ENCODE measurements at regions of chr3 and their contacts with region 1.

Region 1: GRCh38 chr3:101779047-101779821 is at the start of gene NXPE3:
- DNase-seq: peak; percentile 93
- ATAC-seq: peak; percentile 92
- H3K4me3 ChIP-seq: peak within 1 kb of the TSS; percentile 65 to 89 (median 88)
- H3K4me3 Mint-ChIP-seq: peak within 1 kb of the TSS; percentile 94
- H3K27ac ChIP-seq: peak within 1 kb of the TSS; percentile 79 to 86
- H3K27ac Mint-ChIP-seq: peak within 1 kb of the TSS; percentile 98
- H3K4me1 ChIP-seq: peaks cover 21 to 29% of the 10 kb centered on the region in 2 donors
- H3K4me1 Mint-ChIP-seq: peaks cover 37% of the 10 kb centered on the region
- H3K27me3 ChIP-seq: no peaks in the 10 kb centered on the region
- H3K27me3 Mint-ChIP-seq: no peaks in the 10 kb centered on the region
- CTCF ChIP-seq: no peak
- total RNA-seq, gene NXPE3: 18.9 and 19.7 TPM in 2 replicates

Region 2: GRCh38 chr3:100982710-100983109 is 796.5 kb before region 1 on chr3:
- CTCF ChIA-PET with region 1: no interaction called
- POLR2A ChIA-PET with region 1: no interaction called
- intact Hi-C with region 1: no loop called
- DNase-seq: no peak
- ATAC-seq: no peak
- H3K4me3 ChIP-seq: no peak overlapping the region
- H3K4me3 Mint-ChIP-seq: no peak overlapping the region
- H3K27ac ChIP-seq: no peak overlapping the region
- H3K27ac Mint-ChIP-seq: no peak overlapping the region
- H3K4me1 ChIP-seq: no peaks in the 10 kb centered on the region
- H3K4me1 Mint-ChIP-seq: no peaks in the 10 kb centered on the region
- H3K27me3 ChIP-seq: no peaks in the 10 kb centered on the region
- H3K27me3 Mint-ChIP-seq: no peaks in the 10 kb centered on the region
- CTCF ChIP-seq: no peak

Region 3: GRCh38 chr3:101512646-101513418 is 266.4 kb before region 1 on chr3 and contains the start of gene SENP7:
- CTCF ChIA-PET with region 1: no interaction called
- POLR2A ChIA-PET with region 1: no interaction called
- intact Hi-C with region 1: loop called (anchors 5 kb)
- DNase-seq: peak; percentile 89
- ATAC-seq: peak; percentile 72
- H3K4me3 ChIP-seq: peak within 1 kb of the TSS; percentile 67 to 97 (median 86)
- H3K4me3 Mint-ChIP-seq: peak within 1 kb of the TSS; percentile 100
- H3K27ac ChIP-seq: peak within 1 kb of the TSS; percentile 91 to 95
- H3K27ac Mint-ChIP-seq: peak within 1 kb of the TSS; percentile 99
- H3K4me1 ChIP-seq: peaks cover 11 to 12% of the 10 kb centered on the region in 2 donors
- H3K4me1 Mint-ChIP-seq: peaks cover 46% of the 10 kb centered on the region
- H3K27me3 ChIP-seq: peaks cover 0 to 5% (median 0%) of the 10 kb centered on the region in 4 experiments
- H3K27me3 Mint-ChIP-seq: peaks cover 11% of the 10 kb centered on the region
- CTCF ChIP-seq: no peak
- total RNA-seq, gene SENP7: 47.5 and 50.3 TPM in 2 replicates

Region 4: DNA sequence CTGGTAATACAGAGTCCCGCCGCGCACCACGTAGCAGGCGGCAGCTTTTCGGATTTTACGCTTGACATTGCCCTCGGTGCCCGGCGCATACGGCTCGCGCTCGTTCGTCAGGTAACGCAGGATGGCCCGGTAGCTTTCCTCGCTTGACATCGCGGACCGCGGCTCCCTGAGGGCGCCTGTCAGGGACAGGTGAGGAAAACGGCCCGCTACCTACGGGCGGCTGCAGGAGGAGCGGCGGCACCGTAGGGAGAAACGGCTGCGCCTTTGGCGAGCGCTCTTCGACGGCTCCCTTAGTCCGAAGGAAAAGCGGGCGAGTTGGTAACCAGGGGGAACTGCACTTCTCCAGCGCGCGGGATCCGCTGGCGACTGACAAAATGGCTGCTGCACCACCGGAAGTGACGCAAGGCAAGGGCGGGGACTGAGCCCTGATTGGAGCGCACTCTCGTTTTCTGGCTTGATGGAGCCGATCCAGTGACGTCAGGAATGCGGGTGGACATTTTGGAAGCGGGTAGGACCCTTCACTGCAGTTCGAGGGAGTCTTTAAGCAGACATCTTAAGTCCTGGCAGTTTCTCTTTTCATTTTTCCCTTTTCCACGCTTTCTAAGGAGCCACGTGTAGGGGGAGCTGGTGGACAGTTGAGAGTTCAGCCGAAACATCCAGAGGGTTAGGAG is 102.3 kb before region 1 on chr3 and contains the start of gene ZBTB11:
- CTCF ChIA-PET with region 1: no interaction called
- POLR2A ChIA-PET with region 1: interaction called, 5 read pairs
- intact Hi-C with region 1: loop called (anchors 1 kb)
- DNase-seq: peak; percentile 99
- ATAC-seq: peak; percentile 65
- H3K4me3 ChIP-seq: peak within 1 kb of the TSS; percentile 73 to 99 (median 94)
- H3K4me3 Mint-ChIP-seq: peak within 1 kb of the TSS; percentile 94
- H3K27ac ChIP-seq: peak within 1 kb of the TSS; percentile 96 to 98
- H3K27ac Mint-ChIP-seq: peak within 1 kb of the TSS; percentile 97
- H3K4me1 ChIP-seq: peaks cover 17 to 21% of the 10 kb centered on the region in 2 donors
- H3K4me1 Mint-ChIP-seq: peaks cover 40% of the 10 kb centered on the region
- H3K27me3 ChIP-seq: no peaks in the 10 kb centered on the region
- H3K27me3 Mint-ChIP-seq: no peaks in the 10 kb centered on the region
- CTCF ChIP-seq: no peak
- total RNA-seq, gene ZBTB11: 40.7 and 42.6 TPM in 2 replicates

Region 5: DNA sequence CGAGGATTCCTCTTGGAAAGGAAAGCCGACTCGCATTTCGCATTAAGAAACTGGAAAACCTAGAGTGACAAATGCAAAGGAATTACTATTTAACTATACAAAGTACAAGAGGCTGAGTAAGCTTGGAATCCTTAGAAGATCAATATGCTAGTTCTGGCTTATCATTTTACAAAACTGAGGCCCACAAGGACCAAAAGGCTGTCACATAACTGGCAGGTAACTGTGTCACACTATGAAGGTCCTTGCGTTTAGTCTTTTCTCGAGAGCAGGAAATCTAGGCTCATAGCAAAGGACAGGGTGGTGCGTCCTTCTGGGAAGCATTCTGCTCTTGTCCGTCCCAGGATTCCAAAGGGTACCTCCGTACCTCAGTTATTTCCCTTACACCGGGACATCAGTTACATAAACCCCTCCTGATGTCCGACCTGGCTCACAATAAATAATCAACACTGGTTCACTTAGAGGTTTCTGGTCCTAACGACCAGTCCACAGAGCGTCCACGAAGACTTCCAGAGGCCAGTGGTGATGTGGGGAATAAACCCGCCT is 93.3 kb before region 1 on chr3:
- CTCF ChIA-PET with region 1: interaction called, 3 read pairs
- POLR2A ChIA-PET with region 1: interaction called, 6 read pairs
- intact Hi-C with region 1: loop called (anchors 2 kb)
- DNase-seq: no peak
- ATAC-seq: peak; percentile 6
- H3K4me3 ChIP-seq: peak overlapping the region; percentile 64 to 98 (median 84)
- H3K4me3 Mint-ChIP-seq: peak overlapping the region; percentile 100
- H3K27ac ChIP-seq: peak overlapping the region; percentile 89 to 90
- H3K27ac Mint-ChIP-seq: peak overlapping the region; percentile 99
- H3K4me1 ChIP-seq: peaks cover 22 to 32% of the 10 kb centered on the region in 2 donors
- H3K4me1 Mint-ChIP-seq: peaks cover 32% of the 10 kb centered on the region
- H3K27me3 ChIP-seq: no peaks in the 10 kb centered on the region
- H3K27me3 Mint-ChIP-seq: no peaks in the 10 kb centered on the region
- CTCF ChIP-seq: peak; percentile 12

Region 6: GRCh38 chr3:101695779-101696372 is 83.4 kb before region 1 on chr3:
- CTCF ChIA-PET with region 1: interaction called, 3 read pairs
- POLR2A ChIA-PET with region 1: no interaction called
- intact Hi-C with region 1: loop called (anchors 2 kb)
- DNase-seq: peak; percentile 76
- ATAC-seq: no peak
- H3K4me3 ChIP-seq: no peak overlapping the region
- H3K4me3 Mint-ChIP-seq: no peak overlapping the region
- H3K27ac ChIP-seq: no peak overlapping the region
- H3K27ac Mint-ChIP-seq: no peak overlapping the region
- H3K4me1 ChIP-seq: no peaks in the 10 kb centered on the region
- H3K4me1 Mint-ChIP-seq: peaks cover 4% of the 10 kb centered on the region
- H3K27me3 ChIP-seq: no peaks in the 10 kb centered on the region
- H3K27me3 Mint-ChIP-seq: no peaks in the 10 kb centered on the region
- CTCF ChIP-seq: peak; percentile 86

Region 7: DNA sequence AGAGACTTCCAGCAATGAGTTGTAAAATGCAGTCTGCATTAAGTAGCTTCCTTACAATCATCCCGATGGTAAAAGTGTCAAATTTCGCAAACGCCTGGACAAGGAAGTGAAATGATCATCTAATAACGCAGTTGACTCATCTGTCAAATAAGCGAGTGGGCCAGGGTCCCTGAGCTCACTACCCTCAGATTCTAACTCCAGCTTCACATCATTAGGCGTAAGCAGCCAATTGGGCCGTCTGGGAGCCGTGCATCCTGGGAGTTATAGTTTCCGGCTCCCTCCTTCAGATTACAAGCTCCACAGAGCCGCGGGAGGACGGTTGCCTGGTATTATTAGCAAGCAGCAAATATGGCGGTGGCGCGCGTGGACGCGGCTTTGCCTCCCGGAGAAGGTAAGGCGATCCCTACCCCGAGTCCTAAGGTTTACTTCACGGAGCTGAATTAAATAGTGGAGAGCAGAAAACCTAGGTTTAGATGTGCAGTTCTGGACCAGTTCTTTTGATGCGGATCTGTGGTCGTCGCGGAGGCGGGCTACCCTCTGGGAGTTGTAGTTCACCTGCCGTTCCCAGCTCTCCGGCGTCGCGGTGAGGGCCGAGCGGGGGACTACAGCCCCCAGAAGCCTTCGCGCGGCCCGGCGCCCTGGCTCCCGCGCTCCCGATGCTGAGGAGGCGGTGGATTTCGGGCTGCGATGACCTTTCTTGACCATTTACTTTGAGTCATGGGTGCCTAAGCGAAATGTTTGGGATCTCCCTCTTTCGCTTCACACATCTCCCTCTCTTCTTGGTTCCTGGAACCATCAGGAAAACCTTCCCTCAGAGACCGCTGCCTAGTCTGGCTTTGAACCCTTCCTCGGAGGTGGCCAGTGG is 54.7 kb before region 1 on chr3 and contains the start of gene CEP97:
- CTCF ChIA-PET with region 1: interaction called, 3 read pairs
- POLR2A ChIA-PET with region 1: interaction called, 7 read pairs
- intact Hi-C with region 1: loop called (anchors 1 kb)
- DNase-seq: peak; percentile 91
- ATAC-seq: peak; percentile 93
- H3K4me3 ChIP-seq: peak within 1 kb of the TSS; percentile 77 to 99 (median 84)
- H3K4me3 Mint-ChIP-seq: peak within 1 kb of the TSS; percentile 100
- H3K27ac ChIP-seq: peak within 1 kb of the TSS; percentile 70 to 74
- H3K27ac Mint-ChIP-seq: peak within 1 kb of the TSS; percentile 99
- H3K4me1 ChIP-seq: peaks cover 30 to 34% of the 10 kb centered on the region in 2 donors
- H3K4me1 Mint-ChIP-seq: peaks cover 37% of the 10 kb centered on the region
- H3K27me3 ChIP-seq: no peaks in the 10 kb centered on the region
- H3K27me3 Mint-ChIP-seq: no peaks in the 10 kb centered on the region
- CTCF ChIP-seq: no peak
- total RNA-seq, gene CEP97: 15.0 and 15.4 TPM in 2 replicates

Region 8: GRCh38 chr3:101803173-101803782 is 24.0 kb after region 1 on chr3:
- CTCF ChIA-PET with region 1: interaction called, 12 read pairs
- POLR2A ChIA-PET with region 1: no interaction called
- intact Hi-C with region 1: loop called (anchors 1 kb)
- DNase-seq: peak; percentile 75
- ATAC-seq: peak; percentile 99
- H3K4me3 ChIP-seq: no peak overlapping the region
- H3K4me3 Mint-ChIP-seq: no peak overlapping the region
- H3K27ac ChIP-seq: no peak overlapping the region
- H3K27ac Mint-ChIP-seq: no peak overlapping the region
- H3K4me1 ChIP-seq: no peaks in the 10 kb centered on the region
- H3K4me1 Mint-ChIP-seq: peaks cover 4% of the 10 kb centered on the region
- H3K27me3 ChIP-seq: no peaks in the 10 kb centered on the region
- H3K27me3 Mint-ChIP-seq: no peaks in the 10 kb centered on the region
- CTCF ChIP-seq: peak; percentile 90

Measured in B cell (primary cell).